ENCODE measurements at regions of chr5 and their contacts with region 1.

Region 1: DNA sequence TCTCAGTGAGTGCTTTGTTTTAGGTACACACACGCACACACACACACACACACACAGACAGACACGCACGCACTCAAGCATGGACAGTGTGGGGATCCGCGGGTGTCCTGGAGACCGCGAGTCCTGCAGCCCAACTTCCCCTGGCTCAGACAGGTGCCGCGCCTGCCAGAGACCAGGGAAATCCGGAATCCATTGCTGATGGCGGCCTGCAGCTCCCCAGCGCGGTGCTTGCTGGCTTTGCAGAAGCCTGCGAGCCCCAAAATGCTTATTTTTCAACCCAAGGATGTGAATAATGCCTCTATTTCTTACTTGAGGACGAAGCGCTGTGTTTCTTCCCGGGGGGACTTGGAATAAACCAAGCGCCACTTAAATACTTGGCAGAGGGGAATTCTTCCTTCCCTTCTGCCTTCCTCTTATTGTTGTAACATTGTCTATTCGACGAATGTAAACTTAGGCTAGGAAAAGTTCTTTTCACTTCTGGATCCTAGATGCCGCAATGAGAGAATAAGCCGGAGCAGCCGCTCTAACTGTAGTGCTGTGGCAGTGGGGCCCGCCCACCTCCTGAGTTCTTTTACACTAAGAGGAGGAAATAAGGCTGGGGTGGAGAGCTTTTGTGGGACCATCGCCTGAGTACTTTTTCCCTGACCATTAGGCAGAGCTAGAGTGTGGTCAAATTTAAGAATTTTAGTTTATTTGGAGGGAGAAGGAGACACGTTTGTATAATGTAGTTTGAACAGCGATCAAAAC is 802 bp downstream of the ITGA2 start:
- DNase-seq: peak; percentile 39
- ATAC-seq: peak; percentile 5
- H3K4me3 ChIP-seq: peak overlapping the region; percentile 89
- H3K27ac ChIP-seq: peak overlapping the region; percentile 92
- H3K4me1 ChIP-seq: peaks cover 66% of the 10 kb centered on the region
- H3K27me3 ChIP-seq: no peaks in the 10 kb centered on the region
- CTCF ChIP-seq: no peak; the same call in 1 of the 2 replicates

Region 2: DNA sequence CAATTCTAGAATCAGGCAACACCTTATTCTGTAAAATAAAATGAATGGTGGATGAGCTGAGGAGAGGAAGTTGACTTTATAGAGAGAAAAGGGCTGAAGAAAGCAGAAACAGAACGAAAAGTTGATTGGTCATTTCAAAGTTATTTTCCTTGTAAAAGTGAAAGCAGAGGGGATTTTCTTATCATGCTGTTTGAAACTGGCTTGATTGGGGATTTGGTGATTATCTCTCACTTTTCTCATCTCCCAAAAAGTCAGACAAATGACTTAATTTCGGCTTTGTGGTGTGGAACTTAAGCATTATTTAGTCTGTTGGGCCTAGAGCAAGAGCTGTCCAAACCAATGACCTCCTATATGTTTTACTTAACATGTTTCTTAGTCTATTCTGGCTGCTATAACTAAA is 61.3 kb before region 1 on chr5:
- CTCF ChIA-PET with region 1: no interaction called
- POLR2A ChIA-PET with region 1: no interaction called
- intact Hi-C with region 1: no loop called
- DNase-seq: no peak
- ATAC-seq: no peak
- H3K4me3 ChIP-seq: no peak overlapping the region
- H3K27ac ChIP-seq: no peak overlapping the region
- H3K4me1 ChIP-seq: no peaks in the 10 kb centered on the region
- H3K27me3 ChIP-seq: no peaks in the 10 kb centered on the region
- CTCF ChIP-seq: no peak

Region 3: GRCh38 chr5:52948418-52949076 is 41.4 kb before region 1 on chr5:
- CTCF ChIA-PET with region 1: interaction called, 8 read pairs
- POLR2A ChIA-PET with region 1: interaction called, 8 read pairs
- intact Hi-C with region 1: loop called (anchors 1 kb)
- DNase-seq: peak; percentile 89
- ATAC-seq: peak; percentile 86
- H3K4me3 ChIP-seq: no peak overlapping the region
- H3K27ac ChIP-seq: no peak overlapping the region
- H3K4me1 ChIP-seq: peaks cover 29% of the 10 kb centered on the region
- H3K27me3 ChIP-seq: no peaks in the 10 kb centered on the region
- CTCF ChIP-seq: peak; percentile 91

Region 4: DNA sequence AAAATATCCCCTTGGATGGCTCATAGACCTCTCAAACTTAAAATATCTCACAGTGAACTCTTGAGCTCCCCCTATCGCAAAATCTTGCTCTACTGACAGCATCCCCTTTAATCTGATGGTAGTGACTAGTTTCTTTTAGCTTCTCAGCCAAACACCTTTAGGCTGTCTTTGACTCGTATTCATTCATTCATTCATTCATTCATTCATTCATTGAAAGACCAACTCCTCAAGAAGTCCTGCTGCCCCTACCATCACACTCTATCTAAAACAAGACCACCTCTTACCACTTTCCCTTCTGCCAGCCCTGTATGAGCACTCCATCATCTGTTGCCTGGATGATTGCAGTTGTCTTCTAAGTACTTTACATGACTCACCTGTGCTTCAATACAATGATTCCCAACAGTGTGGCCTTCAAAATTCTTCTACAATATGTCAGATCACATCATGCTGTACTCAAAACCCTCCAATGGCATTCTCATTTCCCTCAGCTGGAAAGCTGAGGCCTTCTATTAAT is 46.0 kb after region 1 on chr5:
- CTCF ChIA-PET with region 1: no interaction called
- POLR2A ChIA-PET with region 1: interaction called, 3 read pairs
- intact Hi-C with region 1: loop called (anchors 2 kb)
- DNase-seq: peak; percentile 52
- ATAC-seq: no peak
- H3K4me3 ChIP-seq: no peak overlapping the region
- H3K27ac ChIP-seq: peak overlapping the region; percentile 97
- H3K4me1 ChIP-seq: peaks cover 67% of the 10 kb centered on the region
- H3K27me3 ChIP-seq: no peaks in the 10 kb centered on the region
- CTCF ChIP-seq: peak; percentile 54

Region 5: GRCh38 chr5:53095931-53096525 is 106.1 kb after region 1 on chr5:
- CTCF ChIA-PET with region 1: interaction called, 3 read pairs
- POLR2A ChIA-PET with region 1: no interaction called
- intact Hi-C with region 1: loop called (anchors 5 kb)
- DNase-seq: peak; percentile 80
- ATAC-seq: peak; percentile 41
- H3K4me3 ChIP-seq: no peak overlapping the region
- H3K27ac ChIP-seq: no peak overlapping the region
- H3K4me1 ChIP-seq: peaks cover 8% of the 10 kb centered on the region; the same call in 1 of the 2 replicates
- H3K27me3 ChIP-seq: no peaks in the 10 kb centered on the region
- CTCF ChIP-seq: peak; percentile 87

Region 6: GRCh38 chr5:53323943-53324642 is 334.1 kb after region 1 on chr5:
- CTCF ChIA-PET with region 1: no interaction called
- POLR2A ChIA-PET with region 1: no interaction called
- intact Hi-C with region 1: no loop called
- DNase-seq: peak; percentile 71
- ATAC-seq: peak; percentile 78
- H3K4me3 ChIP-seq: peak overlapping the region; percentile 37; the same call in 1 of the 2 replicates
- H3K27ac ChIP-seq: peak overlapping the region; percentile 93
- H3K4me1 ChIP-seq: peaks cover 33% of the 10 kb centered on the region
- H3K27me3 ChIP-seq: no peaks in the 10 kb centered on the region
- CTCF ChIP-seq: no peak

Region 7: GRCh38 chr5:54184806-54185205 is 1194.9 kb after region 1 on chr5:
- CTCF ChIA-PET with region 1: no interaction called
- POLR2A ChIA-PET with region 1: interaction called, 31 read pairs
- intact Hi-C with region 1: no loop called
- DNase-seq: no peak
- ATAC-seq: no peak
- H3K4me3 ChIP-seq: no peak overlapping the region
- H3K27ac ChIP-seq: no peak overlapping the region
- H3K4me1 ChIP-seq: no peaks in the 10 kb centered on the region
- H3K27me3 ChIP-seq: no peaks in the 10 kb centered on the region
- CTCF ChIP-seq: no peak

Measured in PC-3 (cell line).